WTC11 (cell line): ENCODE measurements at regions of chr19 and their contacts with region 1.

Region 1: DNA sequence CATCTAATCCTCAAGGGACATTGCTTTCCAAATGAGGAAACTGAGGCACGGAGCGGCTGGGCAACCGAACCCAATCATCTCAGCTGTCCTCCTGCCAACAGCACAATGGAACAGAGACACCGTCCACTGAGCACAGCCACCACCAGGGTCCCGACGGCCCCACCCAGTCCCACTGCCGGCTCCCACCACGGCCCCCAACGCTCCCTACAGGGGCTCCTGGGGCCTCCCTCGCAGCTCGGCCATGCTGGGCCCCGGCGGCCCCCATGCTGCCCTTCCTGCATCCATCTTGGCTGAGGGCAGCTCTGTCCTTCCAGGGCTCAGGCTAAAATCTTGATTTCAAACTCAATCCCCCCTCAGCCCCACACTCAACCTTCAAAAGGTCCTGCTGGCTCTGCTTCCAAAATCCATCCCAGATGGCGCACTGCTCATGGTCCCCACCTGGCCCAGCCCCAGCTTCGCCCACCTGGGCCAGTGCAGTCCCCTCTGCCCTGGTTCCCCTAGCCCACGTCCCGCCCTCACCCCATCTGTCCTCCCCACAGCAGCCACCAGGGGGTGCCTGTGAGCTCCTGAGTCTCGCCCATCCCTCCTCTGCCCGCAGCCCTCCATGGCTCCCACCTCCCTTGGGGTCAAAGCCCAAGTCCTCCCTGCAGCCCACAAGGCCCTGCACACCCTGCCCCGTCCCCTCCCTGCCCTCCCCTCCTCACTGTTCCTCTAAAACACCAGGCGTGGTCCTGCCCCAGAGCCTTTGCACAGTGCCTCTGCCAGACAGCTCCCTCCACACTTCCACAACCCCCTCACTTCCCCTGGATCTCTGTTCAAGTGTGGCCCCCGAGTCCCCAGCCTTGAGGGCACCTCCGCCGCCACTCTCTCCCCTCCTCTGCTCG is 7.9 kb downstream of the PIP5K1C start:
- DNase-seq: peak; percentile 66
- ATAC-seq: peak; percentile 51
- H3K4me3 Mint-ChIP-seq: no peak overlapping the region
- H3K27ac Mint-ChIP-seq: no peak overlapping the region
- H3K4me1 Mint-ChIP-seq: peaks cover 4% of the 10 kb centered on the region
- H3K27me3 Mint-ChIP-seq: no peaks in the 10 kb centered on the region
- CTCF ChIP-seq: peak; percentile 57

Region 2: DNA sequence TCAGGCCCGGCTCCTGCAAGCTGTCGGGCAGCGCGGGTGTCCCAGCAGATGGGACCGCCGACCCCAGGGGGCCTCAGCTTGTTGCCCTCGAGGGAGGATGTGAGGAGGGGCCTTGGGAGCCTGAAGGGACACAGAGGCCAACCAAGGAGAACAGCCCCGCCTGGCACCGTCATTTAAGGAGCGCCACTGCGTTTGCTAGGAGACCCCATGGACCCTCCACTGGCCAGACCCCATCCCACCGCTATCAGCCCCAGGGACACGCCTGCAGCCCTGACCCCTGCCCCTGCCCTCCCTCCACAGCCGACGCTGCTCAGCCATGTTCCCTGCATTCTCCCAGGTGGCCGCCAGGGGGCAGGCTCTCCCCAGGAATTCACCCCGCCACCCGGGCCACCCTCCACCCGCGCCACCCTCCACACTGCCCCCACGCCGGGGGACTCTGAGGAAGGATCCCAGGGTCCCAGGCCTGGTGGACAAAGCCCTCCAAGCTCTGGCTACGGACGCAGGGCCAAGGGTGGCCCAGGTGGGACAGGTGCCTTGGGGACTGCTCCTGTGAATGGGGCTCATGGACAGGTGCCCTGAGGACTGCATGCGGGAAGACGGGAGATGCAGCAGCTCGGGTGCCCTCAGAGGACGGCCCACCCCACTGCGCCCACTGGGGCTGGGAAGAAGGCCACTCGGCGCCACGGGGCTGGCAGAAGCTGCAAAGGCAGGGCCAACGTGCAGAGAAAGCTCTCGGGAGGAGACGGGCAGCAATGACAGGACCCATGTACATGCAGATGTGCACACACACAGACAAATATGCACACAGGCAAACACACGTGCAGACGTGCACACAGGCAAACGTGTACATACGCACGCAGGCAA is 26.5 kb before region 1 on chr19:
- CTCF ChIA-PET with region 1: interaction called, 15 read pairs
- POLR2A ChIA-PET with region 1: no interaction called
- DNase-seq: peak; percentile 81
- ATAC-seq: peak; percentile 74
- H3K4me3 Mint-ChIP-seq: no peak overlapping the region
- H3K27ac Mint-ChIP-seq: peak overlapping the region; percentile 76
- H3K4me1 Mint-ChIP-seq: no peaks in the 10 kb centered on the region
- H3K27me3 Mint-ChIP-seq: no peaks in the 10 kb centered on the region
- CTCF ChIP-seq: peak; percentile 98

Region 3: DNA sequence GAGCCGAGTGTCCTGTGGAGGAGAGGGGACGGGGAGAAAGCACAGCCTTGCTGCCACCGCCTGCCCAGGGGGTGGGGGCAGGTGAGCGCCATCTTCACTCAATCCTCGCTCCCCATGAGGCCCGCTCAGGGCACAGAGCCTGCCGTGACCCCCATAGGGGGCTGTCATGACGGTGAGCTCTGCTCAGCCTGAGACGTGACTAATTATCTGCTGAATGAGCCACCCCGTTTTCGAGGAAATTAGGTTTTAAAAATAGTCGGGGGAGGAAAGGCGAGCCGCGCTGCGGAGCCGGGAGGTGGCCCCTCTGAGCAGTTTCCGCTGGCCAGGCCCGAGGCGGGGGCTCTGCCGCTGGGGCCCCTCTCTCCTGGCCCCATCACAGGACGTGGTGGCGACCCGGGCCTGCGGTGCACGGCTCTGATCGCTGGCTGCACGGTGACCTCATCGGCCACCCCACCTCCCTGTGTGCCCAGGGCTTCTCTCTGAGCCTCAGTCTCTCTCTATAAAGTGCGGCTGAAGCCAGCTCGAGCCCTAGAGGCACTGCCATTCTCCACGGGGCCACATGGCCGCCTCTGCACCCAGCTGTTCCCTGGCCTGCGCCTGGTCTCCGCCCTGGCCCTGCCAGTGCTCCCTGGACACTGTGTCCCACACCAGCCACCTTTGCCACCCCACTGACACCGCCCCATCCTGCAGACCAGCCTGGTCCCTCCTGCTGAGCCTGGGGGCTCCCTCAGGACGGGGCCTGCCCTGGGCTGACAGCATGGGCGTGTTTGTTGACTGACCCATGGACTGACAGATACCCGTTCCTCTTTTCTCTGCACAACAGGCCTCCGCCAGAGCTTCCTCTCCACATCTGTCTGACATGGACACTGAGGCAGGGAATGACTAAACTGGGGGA is 20.5 kb before region 1 on chr19:
- CTCF ChIA-PET with region 1: interaction called, 15 read pairs
- POLR2A ChIA-PET with region 1: no interaction called
- DNase-seq: no peak
- ATAC-seq: no peak
- H3K4me3 Mint-ChIP-seq: no peak overlapping the region
- H3K27ac Mint-ChIP-seq: no peak overlapping the region
- H3K4me1 Mint-ChIP-seq: peaks cover 5% of the 10 kb centered on the region; the same call in 1 of the 2 replicates
- H3K27me3 Mint-ChIP-seq: no peaks in the 10 kb centered on the region
- CTCF ChIP-seq: no peak

Region 4: GRCh38 chr19:3710265-3710812 is 18.0 kb after region 1 on chr19:
- CTCF ChIA-PET with region 1: interaction called, 45 read pairs
- POLR2A ChIA-PET with region 1: no interaction called
- DNase-seq: peak; percentile 45
- ATAC-seq: peak; percentile 65
- H3K4me3 Mint-ChIP-seq: no peak overlapping the region
- H3K27ac Mint-ChIP-seq: peak overlapping the region; percentile 51; the same call in 1 of the 2 replicates
- H3K4me1 Mint-ChIP-seq: peaks cover 18% of the 10 kb centered on the region
- H3K27me3 Mint-ChIP-seq: no peaks in the 10 kb centered on the region
- CTCF ChIP-seq: no peak